ENCODE measurements at regions of chrX and their contacts with region 1.

Region 1: GRCh38 chrX:9464435-9465371 is at the start of gene TBL1X:
- DNase-seq: peak in 13 of 14 experiments; percentile 18 to 75 (median 43)
- ATAC-seq: peak; percentile 24
- H3K4me3 ChIP-seq: peak within 1 kb of the TSS; percentile 75
- H3K4me3 Mint-ChIP-seq: peak within 1 kb of the TSS; percentile 89
- H3K27ac ChIP-seq: peak within 1 kb of the TSS in 1 of 2 donors; percentile 61
- H3K27ac Mint-ChIP-seq: peak within 1 kb of the TSS; percentile 95
- H3K4me1 ChIP-seq: peaks cover 57% of the 10 kb centered on the region
- H3K4me1 Mint-ChIP-seq: peaks cover 47% of the 10 kb centered on the region
- H3K27me3 ChIP-seq: no peaks in the 10 kb centered on the region
- H3K27me3 Mint-ChIP-seq: peaks cover 4% of the 10 kb centered on the region
- CTCF ChIP-seq: no peak
- total RNA-seq, gene TBL1X: 17.4 to 19.2 TPM

Region 2: DNA sequence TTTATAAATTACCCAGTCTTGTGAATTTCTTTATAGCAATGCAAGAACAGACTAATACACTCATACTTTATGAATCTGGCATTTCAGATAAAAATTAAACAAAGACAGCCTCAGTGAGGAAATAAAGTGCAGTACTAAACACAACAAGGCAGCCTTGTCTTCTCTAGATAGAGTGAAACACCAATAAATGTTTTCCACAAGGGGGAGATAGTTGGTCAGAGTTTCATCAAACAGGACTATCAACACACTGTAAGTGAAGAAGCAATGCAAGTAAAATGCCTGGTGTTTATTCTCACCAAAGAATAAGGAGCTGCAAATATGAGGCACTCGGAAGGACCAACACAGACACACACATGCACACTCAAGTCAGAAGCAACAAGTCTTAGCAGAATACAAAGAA is 493.6 kb before region 1 on chrX:
- CTCF ChIA-PET with region 1: no interaction called
- POLR2A ChIA-PET with region 1: interaction called, 3 read pairs
- intact Hi-C with region 1: loop called in 1 of 2 experiments (anchors 10 kb)
- DNase-seq: peak in 3 of 14 experiments; percentile 64 to 66 (median 65)
- ATAC-seq: peak; percentile 74
- H3K4me3 ChIP-seq: no peak overlapping the region
- H3K4me3 Mint-ChIP-seq: no peak overlapping the region
- H3K27ac ChIP-seq: no peak overlapping the region
- H3K27ac Mint-ChIP-seq: no peak overlapping the region
- H3K4me1 ChIP-seq: no peaks in the 10 kb centered on the region
- H3K4me1 Mint-ChIP-seq: no peaks in the 10 kb centered on the region
- H3K27me3 ChIP-seq: no peaks in the 10 kb centered on the region
- H3K27me3 Mint-ChIP-seq: peaks cover 2% of the 10 kb centered on the region
- CTCF ChIP-seq: peak; percentile 46

Region 3: DNA sequence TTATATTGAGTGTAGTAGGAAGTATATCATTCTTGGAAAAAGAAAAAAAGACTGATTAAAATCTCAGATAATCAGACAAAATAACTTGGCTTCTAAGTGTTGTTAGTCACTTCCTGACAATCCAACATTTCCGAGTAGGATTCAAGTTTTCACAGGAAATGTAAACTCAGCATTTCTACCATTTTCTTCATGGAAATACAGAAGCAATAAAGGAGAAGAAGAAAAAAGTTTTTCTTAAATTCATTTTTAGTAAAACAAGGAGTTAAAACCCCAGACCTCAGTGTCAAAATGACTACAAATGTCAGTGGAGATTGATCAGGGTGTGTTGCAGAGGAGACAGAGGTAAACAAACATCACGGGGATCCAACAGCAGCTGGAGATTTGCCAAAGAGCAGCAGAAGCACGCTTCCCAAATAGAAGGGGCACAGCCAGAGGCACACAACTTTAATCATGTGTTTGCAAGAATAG is 301.5 kb before region 1 on chrX:
- CTCF ChIA-PET with region 1: no interaction called
- POLR2A ChIA-PET with region 1: no interaction called
- intact Hi-C with region 1: loop called (anchors 2 to 10 kb)
- DNase-seq: no peak
- ATAC-seq: no peak
- H3K4me3 ChIP-seq: no peak overlapping the region
- H3K4me3 Mint-ChIP-seq: no peak overlapping the region
- H3K27ac ChIP-seq: no peak overlapping the region
- H3K27ac Mint-ChIP-seq: no peak overlapping the region
- H3K4me1 ChIP-seq: no peaks in the 10 kb centered on the region
- H3K4me1 Mint-ChIP-seq: peaks cover 21% of the 10 kb centered on the region
- H3K27me3 ChIP-seq: no peaks in the 10 kb centered on the region
- H3K27me3 Mint-ChIP-seq: no peaks in the 10 kb centered on the region
- CTCF ChIP-seq: no peak

Region 4: GRCh38 chrX:9485888-9486287 is 21.2 kb after region 1 on chrX:
- CTCF ChIA-PET with region 1: no interaction called
- POLR2A ChIA-PET with region 1: no interaction called
- intact Hi-C with region 1: loop called in 1 of 2 experiments (anchors 1 kb)
- DNase-seq: no peak
- ATAC-seq: no peak
- H3K4me3 ChIP-seq: no peak overlapping the region
- H3K4me3 Mint-ChIP-seq: no peak overlapping the region
- H3K27ac ChIP-seq: no peak overlapping the region
- H3K27ac Mint-ChIP-seq: no peak overlapping the region
- H3K4me1 ChIP-seq: peaks cover 3% of the 10 kb centered on the region
- H3K4me1 Mint-ChIP-seq: peaks cover 43% of the 10 kb centered on the region
- H3K27me3 ChIP-seq: no peaks in the 10 kb centered on the region
- H3K27me3 Mint-ChIP-seq: no peaks in the 10 kb centered on the region
- CTCF ChIP-seq: no peak

Region 5: DNA sequence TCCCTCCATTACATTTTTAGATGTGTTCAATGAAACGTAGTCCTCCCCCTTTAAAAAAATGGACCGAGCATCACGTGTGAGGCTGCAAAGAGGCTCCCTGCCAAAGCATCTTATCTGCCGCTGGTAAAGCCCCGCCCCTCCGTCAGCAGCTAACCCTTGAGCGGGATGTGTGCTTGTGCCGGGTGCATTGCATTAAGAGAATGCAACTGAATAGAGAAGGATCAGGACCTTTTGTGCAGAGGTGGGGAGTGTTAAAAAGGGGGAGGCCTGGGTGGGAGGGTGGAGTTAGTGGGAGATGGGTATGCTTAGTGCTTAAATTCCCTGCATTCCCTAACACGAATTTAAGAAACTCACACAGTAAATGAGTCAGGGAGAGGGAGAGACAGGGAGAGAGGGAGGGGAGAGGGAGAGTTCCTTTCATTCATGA is 66.2 kb after region 1 on chrX:
- CTCF ChIA-PET with region 1: no interaction called
- POLR2A ChIA-PET with region 1: no interaction called
- intact Hi-C with region 1: loop called in 1 of 2 experiments (anchors 5 kb)
- DNase-seq: peak; percentile 13 to 80 (median 44)
- ATAC-seq: peak; percentile 92
- H3K4me3 ChIP-seq: no peak overlapping the region
- H3K4me3 Mint-ChIP-seq: peak overlapping the region; percentile 61
- H3K27ac ChIP-seq: no peak overlapping the region
- H3K27ac Mint-ChIP-seq: peak overlapping the region; percentile 38
- H3K4me1 ChIP-seq: peaks cover 19% of the 10 kb centered on the region
- H3K4me1 Mint-ChIP-seq: peaks cover 60% of the 10 kb centered on the region
- H3K27me3 ChIP-seq: no peaks in the 10 kb centered on the region
- H3K27me3 Mint-ChIP-seq: no peaks in the 10 kb centered on the region
- CTCF ChIP-seq: no peak

Region 6: GRCh38 chrX:9555354-9555753 is 90.7 kb after region 1 on chrX:
- CTCF ChIA-PET with region 1: no interaction called
- POLR2A ChIA-PET with region 1: no interaction called
- intact Hi-C with region 1: no loop called
- DNase-seq: no peak
- ATAC-seq: no peak
- H3K4me3 ChIP-seq: no peak overlapping the region
- H3K4me3 Mint-ChIP-seq: no peak overlapping the region
- H3K27ac ChIP-seq: no peak overlapping the region
- H3K27ac Mint-ChIP-seq: no peak overlapping the region
- H3K4me1 ChIP-seq: no peaks in the 10 kb centered on the region
- H3K4me1 Mint-ChIP-seq: peaks cover 51% of the 10 kb centered on the region
- H3K27me3 ChIP-seq: no peaks in the 10 kb centered on the region
- H3K27me3 Mint-ChIP-seq: no peaks in the 10 kb centered on the region
- CTCF ChIP-seq: no peak

Measured in CD4-positive, alpha-beta T cell (primary cell).